AG04449 (cell line): ENCODE measurements at regions of chr6 and their contacts with region 1.

Region 1: GRCh38 chr6:116268589-116269293 is 11.0 kb downstream of the TSPYL1 start:
- DNase-seq: peak; percentile 42
- H3K4me3 ChIP-seq: no peak overlapping the region
- CTCF ChIP-seq: peak; percentile 74

Region 2: GRCh38 chr6:116217069-116217468 is 51.7 kb before region 1 on chr6:
- CTCF ChIA-PET with region 1: interaction called, 143 read pairs
- POLR2A ChIA-PET with region 1: no interaction called
- DNase-seq: no peak
- H3K4me3 ChIP-seq: no peak overlapping the region
- CTCF ChIP-seq: peak; percentile 30

Region 3: DNA sequence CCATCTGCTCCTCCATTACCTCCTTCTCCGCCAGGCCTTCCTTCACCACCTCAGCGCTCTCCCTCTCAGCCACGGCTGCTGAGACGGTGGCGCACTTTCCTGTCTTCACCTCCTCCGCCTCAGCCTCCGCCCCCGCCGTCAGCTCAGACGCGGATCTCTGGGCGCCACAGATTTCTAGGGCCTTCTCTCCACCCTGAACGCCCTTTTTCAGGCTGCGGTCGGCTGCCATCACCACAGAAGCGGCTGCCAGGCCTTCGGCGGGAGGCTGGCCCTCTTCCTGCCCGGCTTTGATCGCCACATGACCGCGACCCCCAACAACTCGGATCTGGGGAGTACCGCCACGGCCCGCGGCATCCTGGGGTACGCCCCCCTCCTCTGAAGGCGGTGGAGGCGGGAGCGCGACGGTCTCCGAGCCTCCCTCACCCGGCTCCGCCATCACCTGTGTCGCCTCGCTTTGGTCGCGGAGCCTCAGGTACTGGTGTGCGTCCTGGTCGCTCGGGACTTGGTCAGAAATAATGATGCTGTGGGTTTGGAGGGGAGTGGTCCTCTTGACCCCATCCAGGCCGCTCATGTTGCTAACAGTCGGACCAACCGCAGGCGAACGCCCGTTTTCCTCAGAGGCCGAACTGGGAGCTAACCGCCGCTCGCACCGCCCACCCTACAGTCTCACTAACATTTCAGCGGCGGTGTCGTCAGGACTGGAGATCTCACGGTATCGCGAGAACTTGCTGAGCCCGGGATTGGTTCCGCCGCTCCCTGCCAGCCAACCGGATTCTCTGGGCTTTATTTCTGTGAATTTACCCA is 10.7 kb after region 1 on chr6 and contains the start of gene TSPYL1:
- CTCF ChIA-PET with region 1: interaction called, 28 read pairs
- POLR2A ChIA-PET with region 1: interaction called, 7 read pairs
- DNase-seq: peak; percentile 59
- H3K4me3 ChIP-seq: peak within 1 kb of the TSS; percentile 90
- CTCF ChIP-seq: no peak

Region 4: DNA sequence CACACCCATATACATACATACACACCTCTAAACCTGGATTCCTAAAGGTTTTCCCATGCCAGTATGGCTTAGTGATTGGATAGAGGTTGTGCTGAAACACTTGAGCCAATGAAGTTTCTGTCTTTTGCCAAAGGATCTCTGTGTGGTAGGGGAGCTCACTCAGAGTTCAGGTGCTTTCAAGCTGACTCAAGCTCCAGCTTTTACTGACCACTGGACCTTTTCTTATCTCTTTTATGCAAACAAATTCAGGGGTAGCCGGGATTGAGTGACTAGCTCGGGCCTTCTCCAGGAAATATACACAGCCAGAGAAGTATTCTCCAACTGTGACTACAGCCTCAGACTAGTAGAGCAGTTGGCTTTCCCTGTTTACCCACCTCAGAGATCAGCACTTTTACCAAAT is 80.5 kb after region 1 on chr6:
- CTCF ChIA-PET with region 1: no interaction called
- POLR2A ChIA-PET with region 1: no interaction called
- DNase-seq: no peak
- H3K4me3 ChIP-seq: no peak overlapping the region
- CTCF ChIP-seq: no peak

Region 5: GRCh38 chr6:116424001-116424400 is 155.3 kb after region 1 on chr6:
- CTCF ChIA-PET with region 1: interaction called, 15 read pairs
- POLR2A ChIA-PET with region 1: no interaction called
- DNase-seq: no peak
- H3K4me3 ChIP-seq: no peak overlapping the region
- CTCF ChIP-seq: no peak

Region 6: DNA sequence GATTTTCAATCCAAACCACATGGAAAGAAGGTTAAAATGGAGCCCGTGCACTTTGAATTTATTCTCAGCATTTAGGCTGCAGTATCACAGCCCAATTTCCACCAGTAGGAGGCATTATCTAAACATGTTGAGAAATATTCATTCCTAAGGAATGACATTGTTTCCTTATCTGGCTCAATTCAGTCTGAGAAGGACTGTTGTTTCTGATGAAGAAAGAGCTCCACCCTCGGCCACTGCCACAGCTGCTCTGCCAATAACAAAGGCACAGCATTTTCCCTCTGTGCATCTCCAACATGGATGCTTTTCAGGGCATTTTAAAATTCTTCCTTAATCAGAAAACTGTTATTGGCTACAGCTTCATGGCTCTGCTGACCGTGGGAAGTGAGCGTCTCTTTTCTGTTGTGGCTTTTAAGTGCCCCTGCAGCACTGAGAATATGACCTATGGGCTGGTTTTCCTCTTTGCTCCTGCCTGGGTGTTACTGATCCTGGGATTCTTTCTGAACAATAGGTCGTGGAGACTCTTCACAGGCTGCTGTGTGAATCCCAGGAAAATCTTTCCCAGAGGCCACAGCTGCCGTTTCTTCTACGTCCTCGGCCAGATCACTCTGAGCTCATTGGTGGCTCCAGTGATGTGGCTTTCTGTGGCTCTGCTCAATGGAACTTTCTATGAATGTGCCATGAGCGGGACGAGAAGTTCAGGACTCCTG is 242.8 kb after region 1 on chr6 and contains the start of gene CALHM5:
- CTCF ChIA-PET with region 1: interaction called, 56 read pairs
- POLR2A ChIA-PET with region 1: no interaction called
- DNase-seq: peak; percentile 46
- H3K4me3 ChIP-seq: peak within 1 kb of the TSS; percentile 59
- CTCF ChIP-seq: peak; percentile 53

Region 7: GRCh38 chr6:116542426-116542825 is 273.7 kb after region 1 on chr6:
- CTCF ChIA-PET with region 1: interaction called, 13 read pairs
- POLR2A ChIA-PET with region 1: no interaction called
- DNase-seq: no peak
- H3K4me3 ChIP-seq: no peak overlapping the region
- CTCF ChIP-seq: no peak

Region 8: DNA sequence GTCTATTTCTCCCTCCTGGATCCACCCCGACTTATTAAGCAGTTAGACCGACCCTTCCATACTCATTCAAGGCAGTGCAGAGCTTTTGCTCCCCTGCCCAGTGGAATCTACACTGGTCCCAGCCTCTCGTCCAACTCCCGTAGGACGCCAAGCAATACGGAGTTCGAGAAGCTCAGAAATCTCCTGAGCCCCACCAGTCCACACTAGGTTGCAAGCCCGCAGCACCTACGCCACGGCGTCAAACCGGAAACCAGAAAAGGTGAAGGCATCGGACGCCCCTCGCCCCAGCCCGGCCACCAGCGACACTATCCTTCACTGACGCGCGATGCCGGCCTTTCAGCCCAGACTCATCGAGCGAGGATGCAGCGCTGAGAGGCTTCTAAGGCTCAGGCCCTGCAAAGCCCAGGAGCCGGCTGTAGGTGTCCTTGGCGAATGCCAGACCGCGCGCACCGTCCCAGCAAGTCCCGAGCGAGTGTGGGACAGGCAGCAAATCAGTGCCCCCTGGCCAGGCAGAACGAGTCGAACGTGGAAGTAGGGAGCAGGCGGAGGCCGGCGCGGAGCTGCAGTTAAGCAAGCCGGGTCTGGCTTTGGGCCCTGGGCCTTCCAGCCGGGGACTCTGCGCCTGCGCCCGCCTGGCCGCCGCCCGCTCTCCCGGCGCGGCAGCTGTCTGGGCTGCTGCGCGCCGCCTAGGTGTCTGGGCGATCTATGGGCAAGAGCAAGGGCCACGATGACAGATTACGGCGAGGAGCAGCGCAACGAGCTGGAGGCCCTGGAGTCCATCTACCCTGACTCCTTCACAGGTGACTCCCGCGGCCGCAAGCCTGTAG is 302.3 kb after region 1 on chr6 and contains the start of gene RWDD1:
- CTCF ChIA-PET with region 1: interaction called, 89 read pairs
- POLR2A ChIA-PET with region 1: no interaction called
- DNase-seq: peak; percentile 98
- H3K4me3 ChIP-seq: peak within 1 kb of the TSS; percentile 94
- CTCF ChIP-seq: peak; percentile 2